Heart right ventricle (tissue), 16 donors: ENCODE measurements at regions of chr11 and their contacts with region 1.

Region 1: DNA sequence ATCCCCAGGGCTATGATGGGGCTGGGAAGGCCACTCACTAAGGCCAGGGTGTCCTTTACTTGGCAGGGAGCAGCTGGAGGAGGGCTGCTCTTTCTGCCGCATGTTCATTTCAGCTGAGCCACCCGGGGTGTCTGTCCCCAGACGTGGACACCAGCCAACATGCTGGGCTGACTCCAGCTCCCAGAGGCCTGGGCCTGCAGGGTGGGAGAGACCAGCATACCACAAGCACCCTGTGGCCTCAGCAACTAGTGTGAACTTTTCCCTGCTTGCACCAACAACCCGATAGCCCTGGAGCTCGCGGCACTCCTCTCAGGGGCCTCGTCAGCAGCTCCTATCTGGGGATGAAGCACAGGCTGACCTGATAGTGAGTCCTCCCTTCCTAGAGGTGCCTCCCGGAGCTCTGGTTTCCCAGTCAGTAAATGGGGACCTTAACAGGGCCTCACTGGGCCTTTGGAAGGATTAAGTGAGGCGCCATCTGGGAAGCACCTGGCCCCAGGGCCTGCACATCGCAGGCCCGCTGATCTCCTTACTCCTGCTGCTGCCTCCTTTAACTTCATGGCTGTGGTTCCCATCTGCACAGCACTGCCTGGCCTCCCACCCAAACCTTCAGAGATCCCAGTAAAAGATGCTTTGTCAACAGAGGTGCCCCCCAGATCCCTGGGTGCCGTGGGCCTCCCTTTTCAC is 83.4 kb downstream of the GALNT18 start:
- DNase-seq: peak; percentile 77 to 79
- ATAC-seq: peak; percentile 57 to 88 (median 78)
- H3K4me3 ChIP-seq: no peak overlapping the region
- H3K27ac ChIP-seq: peak overlapping the region; percentile 77 to 95 (median 84)
- H3K4me1 ChIP-seq: peaks cover 30 to 100% (median 73%) of the 10 kb centered on the region in 9 donors
- H3K27me3 ChIP-seq: no peaks in the 10 kb centered on the region
- CTCF ChIP-seq: no peak

Region 2: GRCh38 chr11:11400635-11401232 is 137.7 kb before region 1 on chr11:
- intact Hi-C with region 1: loop called in 2 of 10 experiments (anchors 10 kb)
- DNase-seq: no peak
- ATAC-seq: no peak
- H3K4me3 ChIP-seq: no peak overlapping the region
- H3K27ac ChIP-seq: no peak overlapping the region
- H3K4me1 ChIP-seq: peaks cover 0 to 51% (median 13%) of the 10 kb centered on the region in 9 donors
- H3K27me3 ChIP-seq: no peaks in the 10 kb centered on the region
- CTCF ChIP-seq: peak in 6 of 9 donors; percentile 8 to 28 (median 26)

Region 3: DNA sequence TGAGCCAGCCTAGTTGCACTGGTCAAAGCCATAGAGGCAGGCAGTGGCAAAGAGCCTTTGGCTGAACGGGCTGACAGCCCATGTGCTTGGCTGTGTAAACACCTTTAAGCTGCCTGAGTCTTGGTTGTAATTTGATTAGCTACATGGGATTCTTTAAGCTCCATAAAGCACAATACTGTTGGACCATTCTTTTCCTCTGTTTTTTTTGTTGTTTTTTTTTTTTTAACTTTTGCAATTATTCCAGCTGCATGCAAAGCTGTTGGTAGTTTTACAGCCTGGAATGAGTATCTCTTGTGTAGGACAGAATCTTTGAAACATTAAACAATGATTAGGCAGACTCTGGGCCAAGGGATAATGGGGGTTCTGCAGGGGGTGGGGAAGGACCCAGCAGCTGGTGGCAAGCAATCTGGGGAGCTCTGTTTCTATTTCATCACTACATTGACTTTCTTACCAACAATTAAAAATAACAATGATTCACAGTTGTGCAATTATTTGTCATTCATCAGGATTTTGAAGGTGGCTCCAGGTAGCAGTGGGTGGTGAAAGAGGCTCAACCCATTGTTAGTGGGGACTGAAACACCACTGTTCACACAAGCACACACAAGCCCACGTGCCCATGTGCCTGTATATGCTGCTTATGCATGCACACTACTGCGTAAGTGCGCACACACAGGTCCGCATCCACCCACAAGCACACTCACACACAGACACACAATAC is 115.8 kb before region 1 on chr11:
- intact Hi-C with region 1: loop called in 1 of 10 experiments (anchors 5 kb)
- DNase-seq: no peak
- ATAC-seq: no peak
- H3K4me3 ChIP-seq: no peak overlapping the region
- H3K27ac ChIP-seq: no peak overlapping the region
- H3K4me1 ChIP-seq: peaks cover 5 to 68% (median 35%) of the 10 kb centered on the region in 9 donors
- H3K27me3 ChIP-seq: peaks cover 0 to 20% (median 0%) of the 10 kb centered on the region in 7 donors
- CTCF ChIP-seq: no peak

Region 4: GRCh38 chr11:11430431-11430830 is 108.0 kb before region 1 on chr11:
- intact Hi-C with region 1: loop called in 2 of 10 experiments (anchors 5 kb)
- DNase-seq: no peak
- ATAC-seq: no peak
- H3K4me3 ChIP-seq: no peak overlapping the region
- H3K27ac ChIP-seq: no peak overlapping the region
- H3K4me1 ChIP-seq: peaks cover 4 to 40% (median 24%) of the 10 kb centered on the region in 9 donors
- H3K27me3 ChIP-seq: no peaks in the 10 kb centered on the region
- CTCF ChIP-seq: no peak

Region 5: GRCh38 chr11:11569936-11570491 is 31.6 kb after region 1 on chr11:
- intact Hi-C with region 1: loop called in 1 of 10 experiments (anchors 5 kb)
- DNase-seq: peak; percentile 70 to 85
- ATAC-seq: peak; percentile 87 to 95 (median 92)
- H3K4me3 ChIP-seq: peak overlapping the region in 6 of 10 donors; percentile 4 to 39 (median 29)
- H3K27ac ChIP-seq: peak overlapping the region; percentile 49 to 88 (median 79)
- H3K4me1 ChIP-seq: peaks cover 5 to 82% (median 46%) of the 10 kb centered on the region in 9 donors
- H3K27me3 ChIP-seq: no peaks in the 10 kb centered on the region
- CTCF ChIP-seq: peak in 4 of 9 donors; percentile 4 to 40 (median 37)

Region 6: GRCh38 chr11:11584446-11584810 is 46.0 kb after region 1 on chr11:
- intact Hi-C with region 1: loop called in 3 of 10 experiments (anchors 5 kb)
- DNase-seq: no peak
- ATAC-seq: no peak
- H3K4me3 ChIP-seq: no peak overlapping the region
- H3K27ac ChIP-seq: peak overlapping the region in 3 of 10 donors; percentile 78 to 90 (median 79)
- H3K4me1 ChIP-seq: peaks cover 21 to 98% (median 58%) of the 10 kb centered on the region in 9 donors
- H3K27me3 ChIP-seq: no peaks in the 10 kb centered on the region
- CTCF ChIP-seq: no peak

Region 7: GRCh38 chr11:11604370-11604980 is 66.1 kb after region 1 on chr11:
- intact Hi-C with region 1: no loop called
- DNase-seq: no peak
- ATAC-seq: no peak
- H3K4me3 ChIP-seq: no peak overlapping the region
- H3K27ac ChIP-seq: no peak overlapping the region
- H3K4me1 ChIP-seq: peaks cover 0 to 31% (median 11%) of the 10 kb centered on the region in 9 donors
- H3K27me3 ChIP-seq: no peaks in the 10 kb centered on the region
- CTCF ChIP-seq: no peak